ENCODE measurements at regions of chr2 and their contacts with region 1.

Region 1: GRCh38 chr2:61959381-61960293 is 54.2 kb downstream of the COMMD1 start:
- DNase-seq: no peak
- H3K4me3 ChIP-seq: no peak overlapping the region
- H3K27ac ChIP-seq: no peak overlapping the region
- H3K4me1 ChIP-seq: peaks cover 0 to 7% (median 0%) of the 10 kb centered on the region in 4 experiments; a peak in 1 of 7 replicates
- H3K27me3 ChIP-seq: no peaks in the 10 kb centered on the region
- CTCF ChIP-seq: no peak
- EP300 ChIP-seq: no peak
- POLR2A ChIP-seq: no peak
- RAD21 ChIP-seq: no peak

Region 2: DNA sequence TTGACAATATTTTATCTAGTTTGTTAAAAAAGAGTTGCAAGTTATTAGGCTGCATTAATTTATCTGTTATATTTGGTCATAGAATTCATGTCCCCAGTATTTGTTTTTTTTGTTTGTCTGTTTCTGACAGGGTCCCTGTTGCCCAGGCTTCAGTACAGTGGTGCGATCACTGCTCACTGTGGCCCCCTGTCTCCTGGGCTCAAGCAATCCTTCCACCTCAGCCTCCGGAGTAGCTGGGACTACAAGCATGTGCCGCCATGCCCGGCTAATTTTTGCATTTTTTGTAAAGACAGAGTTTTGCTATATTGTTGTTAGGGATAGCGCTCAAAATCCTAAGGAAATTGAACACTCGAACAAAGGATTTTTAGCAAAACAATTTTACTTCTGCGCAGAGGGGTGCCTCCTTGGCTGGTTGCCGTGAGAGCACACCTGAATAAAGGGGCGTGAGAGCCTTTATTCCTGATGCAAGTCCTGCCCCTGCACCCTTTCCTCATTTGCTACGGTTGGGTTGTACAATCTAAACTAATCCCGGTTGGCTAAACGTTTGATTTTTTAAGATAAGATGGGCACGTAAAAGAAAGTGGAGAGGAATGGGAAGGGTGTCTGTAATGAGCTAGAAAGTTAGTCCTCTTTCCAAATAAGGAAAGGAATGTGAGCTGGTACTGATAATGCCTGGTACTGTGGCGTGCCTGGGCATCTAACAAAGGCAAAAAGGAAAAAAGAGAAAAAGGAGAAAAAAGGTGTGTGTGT is 11.3 kb after region 1 on chr2:
- CTCF ChIA-PET with region 1: interaction called, 12 read pairs
- POLR2A ChIA-PET with region 1: no interaction called
- DNase-seq: no peak
- H3K4me3 ChIP-seq: peak overlapping the region in 3 of 4 experiments; percentile 8 to 42 (median 14); a peak in 2 of 8 replicates
- H3K27ac ChIP-seq: no peak overlapping the region; the same call in 1 of the 2 replicates
- H3K4me1 ChIP-seq: peaks cover 0 to 3% (median 0%) of the 10 kb centered on the region in 4 experiments; a peak in 3 of 7 replicates
- H3K27me3 ChIP-seq: no peaks in the 10 kb centered on the region
- CTCF ChIP-seq: peak; percentile 37 to 53 (median 49)
- EP300 ChIP-seq: no peak
- POLR2A ChIP-seq: no peak
- RAD21 ChIP-seq: peak; percentile 37 to 60